Natural killer cell (primary cell): ENCODE measurements at regions of chr14 and their contacts with region 1.

Region 1: GRCh38 chr14:45083971-45084722 is at the start of gene PRPF39:
- DNase-seq: peak; percentile 94 to 99
- ATAC-seq: peak; percentile 92 to 98 (median 95)
- H3K4me3 ChIP-seq: peak within 1 kb of the TSS; percentile 82
- H3K4me3 Mint-ChIP-seq: peak within 1 kb of the TSS; percentile 95
- H3K27ac ChIP-seq: peak within 1 kb of the TSS; percentile 69
- H3K27ac Mint-ChIP-seq: peak within 1 kb of the TSS; percentile 89 to 96
- H3K4me1 ChIP-seq: peaks cover 12% of the 10 kb centered on the region
- H3K4me1 Mint-ChIP-seq: peaks cover 43 to 47% of the 10 kb centered on the region in 2 donors
- H3K27me3 ChIP-seq: no peaks in the 10 kb centered on the region
- H3K27me3 Mint-ChIP-seq: no peaks in the 10 kb centered on the region
- CTCF ChIP-seq: no peak
- total RNA-seq, gene PRPF39: 49.2 to 61.2 (median 52.5) TPM

Region 2: DNA sequence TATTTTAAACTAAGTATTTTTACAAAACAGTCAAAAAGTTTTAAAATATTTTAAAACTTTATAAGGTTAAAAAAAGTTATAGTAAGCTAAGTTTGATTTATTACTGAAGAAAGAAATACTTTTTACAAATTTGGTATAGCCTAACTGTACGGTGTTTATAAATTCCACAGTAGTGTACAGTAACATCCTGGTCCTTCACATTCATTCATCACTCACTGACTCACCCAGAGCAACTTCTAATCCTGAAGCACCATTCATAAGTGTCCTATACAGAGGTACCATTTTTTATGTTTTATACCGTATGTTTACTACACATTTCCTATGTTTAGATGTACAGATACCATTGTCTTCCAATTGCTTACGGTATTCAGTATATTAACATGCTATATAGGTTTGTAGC is 292.4 kb before region 1 on chr14:
- intact Hi-C with region 1: no loop called
- DNase-seq: no peak
- ATAC-seq: no peak
- H3K4me3 ChIP-seq: no peak overlapping the region
- H3K4me3 Mint-ChIP-seq: no peak overlapping the region
- H3K27ac ChIP-seq: no peak overlapping the region
- H3K27ac Mint-ChIP-seq: no peak overlapping the region
- H3K4me1 ChIP-seq: no peaks in the 10 kb centered on the region
- H3K4me1 Mint-ChIP-seq: no peaks in the 10 kb centered on the region
- H3K27me3 ChIP-seq: no peaks in the 10 kb centered on the region
- H3K27me3 Mint-ChIP-seq: peaks cover 0 to 3% of the 10 kb centered on the region in 2 donors
- CTCF ChIP-seq: no peak

Region 3: DNA sequence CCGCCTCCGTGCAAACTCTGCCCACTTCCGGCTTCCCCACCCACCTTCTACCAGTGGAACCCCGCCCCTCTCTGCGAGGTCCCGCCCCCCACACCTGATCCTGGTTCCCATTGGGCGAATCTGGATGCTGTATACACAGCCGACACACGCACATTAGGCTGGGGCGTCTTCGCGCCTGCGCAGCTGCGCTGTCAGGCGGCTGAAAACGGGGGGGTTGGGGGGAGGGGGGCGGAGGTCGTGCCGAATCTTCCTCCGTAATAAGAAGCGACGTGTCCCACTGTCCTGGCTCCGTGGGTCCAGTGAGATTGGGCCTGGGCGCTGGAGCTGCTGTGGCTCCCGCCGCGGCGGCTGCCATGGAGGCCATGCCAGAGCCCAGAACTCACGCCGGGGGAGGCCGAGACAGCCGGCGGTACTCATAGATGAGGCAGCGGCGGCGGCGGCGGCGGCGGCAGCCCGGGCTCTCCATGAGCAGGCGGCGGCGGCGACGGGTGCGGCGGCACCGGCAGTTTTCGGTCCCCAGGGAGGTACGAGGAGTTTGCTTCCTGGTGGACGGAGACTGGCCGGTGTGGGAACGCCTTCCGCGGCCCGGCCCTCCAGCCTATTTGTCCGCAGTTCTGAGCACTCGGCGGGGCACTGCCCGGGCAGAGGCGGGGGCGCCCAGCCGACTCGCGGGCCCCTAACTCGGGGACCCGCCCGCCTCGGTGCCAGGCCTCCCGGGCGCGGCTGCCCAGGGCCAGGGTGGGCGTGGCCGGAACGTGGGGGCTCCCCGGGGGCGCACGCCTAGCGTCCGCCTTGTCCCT is 186.9 kb before region 1 on chr14:
- intact Hi-C with region 1: loop called (anchors 2 kb)
- DNase-seq: peak; percentile 84 to 99
- ATAC-seq: peak; percentile 97 to 100 (median 97)
- H3K4me3 ChIP-seq: peak overlapping the region; percentile 75
- H3K4me3 Mint-ChIP-seq: peak overlapping the region; percentile 86
- H3K27ac ChIP-seq: peak overlapping the region; percentile 92
- H3K27ac Mint-ChIP-seq: peak overlapping the region; percentile 88 to 97
- H3K4me1 ChIP-seq: peaks cover 8% of the 10 kb centered on the region
- H3K4me1 Mint-ChIP-seq: peaks cover 11 to 14% of the 10 kb centered on the region in 2 donors
- H3K27me3 ChIP-seq: no peaks in the 10 kb centered on the region
- H3K27me3 Mint-ChIP-seq: no peaks in the 10 kb centered on the region
- CTCF ChIP-seq: no peak

Region 4: DNA sequence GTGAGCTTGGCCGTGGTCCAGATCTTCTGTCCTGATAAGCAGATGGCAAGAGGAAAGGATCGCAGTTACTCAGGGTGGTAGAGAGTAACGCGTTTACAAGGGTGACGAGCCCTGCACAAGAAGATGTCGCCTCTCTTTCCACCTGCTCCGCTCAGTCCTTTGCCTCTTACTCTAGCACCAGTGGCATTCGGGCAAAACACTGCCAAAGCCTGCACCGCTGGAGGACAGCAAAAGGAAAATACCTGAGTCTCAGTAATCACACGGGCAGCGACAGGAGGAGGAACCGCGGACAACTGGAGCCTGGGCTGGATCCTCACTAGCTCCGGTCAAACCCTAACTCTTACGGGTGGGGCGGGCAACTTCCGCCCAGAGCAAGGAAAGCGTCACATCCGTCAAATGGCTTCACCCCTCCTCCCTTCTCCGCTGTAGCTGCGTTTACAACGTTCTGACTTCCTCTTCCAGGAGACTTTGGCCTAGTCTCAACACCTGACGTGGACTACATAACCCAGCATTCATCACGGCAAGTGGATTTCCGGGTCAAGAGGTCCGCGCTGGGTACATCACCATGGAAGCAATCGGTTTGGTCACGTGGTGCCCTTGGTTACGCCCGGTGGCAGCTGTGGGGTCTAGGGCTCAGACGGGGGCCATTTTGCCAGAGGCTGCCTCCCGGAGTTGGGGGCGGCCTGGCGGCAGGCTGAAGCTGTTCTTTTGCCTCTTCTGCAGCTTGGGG is 122.4 kb before region 1 on chr14 and contains the starts of genes KLHL28 and TOGARAM1:
- intact Hi-C with region 1: loop called (anchors 1 kb)
- DNase-seq: peak; percentile 93 to 99
- ATAC-seq: peak; percentile 89 to 98 (median 93)
- H3K4me3 ChIP-seq: peak within 1 kb of the TSS; percentile 97
- H3K4me3 Mint-ChIP-seq: no peak within 1 kb of the TSS
- H3K27ac ChIP-seq: peak within 1 kb of the TSS; percentile 93
- H3K27ac Mint-ChIP-seq: no peak within 1 kb of the TSS
- H3K4me1 ChIP-seq: peaks cover 23% of the 10 kb centered on the region
- H3K4me1 Mint-ChIP-seq: peaks cover 41 to 43% of the 10 kb centered on the region in 2 donors
- H3K27me3 ChIP-seq: no peaks in the 10 kb centered on the region
- H3K27me3 Mint-ChIP-seq: no peaks in the 10 kb centered on the region
- CTCF ChIP-seq: no peak
- total RNA-seq, gene KLHL28: 47.6 to 59.7 (median 56.0) TPM
- total RNA-seq, gene TOGARAM1: 17.4 to 21.4 (median 19.6) TPM

Region 5: GRCh38 chr14:45095143-45095542 is 11.0 kb after region 1 on chr14:
- intact Hi-C with region 1: no loop called
- DNase-seq: no peak
- ATAC-seq: no peak
- H3K4me3 ChIP-seq: no peak overlapping the region
- H3K4me3 Mint-ChIP-seq: no peak overlapping the region
- H3K27ac ChIP-seq: no peak overlapping the region
- H3K27ac Mint-ChIP-seq: no peak overlapping the region
- H3K4me1 ChIP-seq: no peaks in the 10 kb centered on the region
- H3K4me1 Mint-ChIP-seq: peaks cover 9 to 10% of the 10 kb centered on the region in 2 donors
- H3K27me3 ChIP-seq: no peaks in the 10 kb centered on the region
- H3K27me3 Mint-ChIP-seq: no peaks in the 10 kb centered on the region
- CTCF ChIP-seq: no peak

Region 6: DNA sequence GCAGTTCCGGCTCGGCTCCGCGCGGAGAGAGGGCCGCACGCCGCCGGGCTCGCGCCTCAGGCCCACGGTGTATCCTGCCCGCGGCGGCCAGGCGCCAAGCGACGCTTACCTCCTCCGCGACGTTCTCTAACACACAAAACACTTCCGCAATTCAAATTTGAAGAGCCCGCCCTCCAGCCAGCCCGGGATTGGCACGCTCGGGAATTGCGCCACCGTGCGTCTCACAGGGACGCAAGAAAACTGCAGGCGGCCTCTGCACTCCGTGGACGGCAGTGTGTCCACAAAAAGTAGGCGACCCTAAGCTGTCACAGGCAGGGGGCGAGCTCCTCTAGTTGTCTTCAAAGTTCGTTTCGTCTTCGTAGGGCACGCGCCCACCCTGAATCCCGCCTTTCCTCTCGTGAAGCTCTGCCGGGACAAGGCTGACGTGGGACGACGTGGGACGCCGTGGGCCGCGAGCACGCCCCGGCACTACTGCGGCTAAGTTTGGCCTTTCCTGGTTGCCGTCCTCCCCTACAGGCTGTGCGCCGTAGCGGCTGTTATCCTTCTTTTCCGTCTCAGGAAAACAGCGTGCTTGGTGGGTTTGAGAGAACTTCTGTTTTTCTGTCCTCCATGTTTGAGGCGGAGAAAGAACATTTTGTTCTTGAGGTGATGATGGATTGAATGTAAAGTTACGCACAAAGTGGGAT is 169.1 kb after region 1 on chr14 and contains the start of gene MIS18BP1:
- intact Hi-C with region 1: loop called (anchors 2 kb)
- DNase-seq: peak; percentile 87 to 97
- ATAC-seq: peak; percentile 88 to 95 (median 90)
- H3K4me3 ChIP-seq: peak within 1 kb of the TSS; percentile 92
- H3K4me3 Mint-ChIP-seq: peak within 1 kb of the TSS; percentile 93
- H3K27ac ChIP-seq: peak within 1 kb of the TSS; percentile 91
- H3K27ac Mint-ChIP-seq: peak within 1 kb of the TSS; percentile 92 to 94
- H3K4me1 ChIP-seq: peaks cover 27% of the 10 kb centered on the region
- H3K4me1 Mint-ChIP-seq: peaks cover 18 to 20% of the 10 kb centered on the region in 2 donors
- H3K27me3 ChIP-seq: no peaks in the 10 kb centered on the region
- H3K27me3 Mint-ChIP-seq: no peaks in the 10 kb centered on the region
- CTCF ChIP-seq: peak; percentile 86
- total RNA-seq, gene MIS18BP1: 60.3 to 70.2 (median 66.3) TPM